ENCODE measurements at regions of chr7 and their contacts with region 1.

Region 1: DNA sequence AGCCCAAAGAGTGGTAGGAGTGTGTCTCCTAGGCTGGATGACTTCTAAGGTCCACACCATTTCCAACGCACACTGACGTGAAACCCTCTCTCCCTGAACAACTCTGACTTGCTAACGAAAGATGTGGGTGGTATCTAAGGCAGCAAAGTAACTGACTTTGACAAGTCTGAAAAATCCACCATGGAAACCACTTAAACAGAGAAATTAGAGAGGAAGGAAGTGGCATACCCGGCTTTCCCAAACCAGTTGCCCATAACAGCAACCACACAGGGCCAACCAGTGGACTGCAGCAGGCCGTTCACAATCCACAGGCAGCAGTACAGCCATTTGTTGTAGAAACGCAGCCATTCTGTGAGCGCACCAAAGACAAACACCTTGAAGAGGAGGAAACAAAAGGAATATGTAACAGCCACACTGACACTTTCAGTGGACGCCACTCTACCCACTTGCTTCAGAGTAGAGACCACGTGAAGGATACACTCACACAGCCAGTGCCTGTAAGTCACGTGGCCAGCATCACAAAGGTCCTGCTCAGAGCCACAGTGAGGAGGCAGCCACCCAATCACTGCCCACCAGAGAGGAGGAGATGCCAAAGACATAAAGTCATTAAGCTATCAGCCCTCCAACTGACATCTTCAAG is 39.8 kb downstream of the SLC37A3 start:
- DNase-seq: peak; percentile 47
- ATAC-seq: peak; percentile 62
- H3K4me3 Mint-ChIP-seq: peak overlapping the region; percentile 47
- H3K27ac Mint-ChIP-seq: peak overlapping the region; percentile 97
- H3K4me1 Mint-ChIP-seq: peaks cover 30% of the 10 kb centered on the region
- H3K27me3 Mint-ChIP-seq: no peaks in the 10 kb centered on the region

Region 2: GRCh38 chr7:140059273-140060242 is 299.0 kb before region 1 on chr7:
- CTCF ChIA-PET with region 1: no interaction called
- POLR2A ChIA-PET with region 1: no interaction called
- intact Hi-C with region 1: no loop called
- DNase-seq: peak; percentile 75
- ATAC-seq: peak; percentile 39
- H3K4me3 Mint-ChIP-seq: peak overlapping the region; percentile 78
- H3K27ac Mint-ChIP-seq: peak overlapping the region; percentile 86
- H3K4me1 Mint-ChIP-seq: peaks cover 42% of the 10 kb centered on the region
- H3K27me3 Mint-ChIP-seq: no peaks in the 10 kb centered on the region

Region 3: DNA sequence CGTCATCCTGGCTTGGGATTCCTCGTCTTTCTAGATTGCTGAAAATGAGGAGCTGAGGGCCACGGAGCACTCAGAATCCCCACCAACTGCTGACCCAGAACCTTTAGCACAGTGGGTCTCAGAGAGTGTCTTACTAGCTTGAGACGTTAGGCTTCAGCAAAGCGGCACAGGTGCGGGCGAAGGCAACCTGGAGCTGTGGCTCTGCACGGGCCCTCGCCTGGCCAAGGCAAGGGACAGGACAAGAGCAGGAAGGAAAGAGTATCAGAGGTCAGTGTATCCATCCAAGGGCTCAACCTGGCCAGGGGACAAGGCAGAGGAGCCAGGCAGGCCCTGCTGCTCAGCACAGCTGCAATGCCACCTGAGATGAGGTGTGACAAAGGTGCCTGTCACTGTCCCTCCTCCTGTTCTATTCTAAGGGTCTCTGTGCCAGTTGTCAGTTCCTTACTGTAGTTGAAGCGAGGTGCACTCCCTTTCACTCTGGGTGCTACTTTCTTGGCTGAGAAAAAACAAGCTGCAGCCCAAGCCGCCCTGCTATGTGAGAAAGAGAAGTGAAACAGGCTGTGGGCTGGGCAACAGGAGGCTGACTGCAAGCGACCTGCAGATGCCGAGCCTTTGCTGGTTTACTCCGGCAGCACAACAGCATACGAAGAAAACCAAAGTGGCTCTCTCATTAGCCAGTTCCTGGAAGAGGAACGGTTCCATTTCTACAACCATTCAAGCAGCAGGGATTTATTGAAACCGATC is 148.5 kb before region 1 on chr7:
- CTCF ChIA-PET with region 1: no interaction called
- POLR2A ChIA-PET with region 1: interaction called, 11 read pairs
- intact Hi-C with region 1: no loop called
- DNase-seq: peak; percentile 83
- ATAC-seq: peak; percentile 62
- H3K4me3 Mint-ChIP-seq: peak overlapping the region; percentile 2
- H3K27ac Mint-ChIP-seq: peak overlapping the region; percentile 88
- H3K4me1 Mint-ChIP-seq: peaks cover 80% of the 10 kb centered on the region
- H3K27me3 Mint-ChIP-seq: no peaks in the 10 kb centered on the region

Region 4: DNA sequence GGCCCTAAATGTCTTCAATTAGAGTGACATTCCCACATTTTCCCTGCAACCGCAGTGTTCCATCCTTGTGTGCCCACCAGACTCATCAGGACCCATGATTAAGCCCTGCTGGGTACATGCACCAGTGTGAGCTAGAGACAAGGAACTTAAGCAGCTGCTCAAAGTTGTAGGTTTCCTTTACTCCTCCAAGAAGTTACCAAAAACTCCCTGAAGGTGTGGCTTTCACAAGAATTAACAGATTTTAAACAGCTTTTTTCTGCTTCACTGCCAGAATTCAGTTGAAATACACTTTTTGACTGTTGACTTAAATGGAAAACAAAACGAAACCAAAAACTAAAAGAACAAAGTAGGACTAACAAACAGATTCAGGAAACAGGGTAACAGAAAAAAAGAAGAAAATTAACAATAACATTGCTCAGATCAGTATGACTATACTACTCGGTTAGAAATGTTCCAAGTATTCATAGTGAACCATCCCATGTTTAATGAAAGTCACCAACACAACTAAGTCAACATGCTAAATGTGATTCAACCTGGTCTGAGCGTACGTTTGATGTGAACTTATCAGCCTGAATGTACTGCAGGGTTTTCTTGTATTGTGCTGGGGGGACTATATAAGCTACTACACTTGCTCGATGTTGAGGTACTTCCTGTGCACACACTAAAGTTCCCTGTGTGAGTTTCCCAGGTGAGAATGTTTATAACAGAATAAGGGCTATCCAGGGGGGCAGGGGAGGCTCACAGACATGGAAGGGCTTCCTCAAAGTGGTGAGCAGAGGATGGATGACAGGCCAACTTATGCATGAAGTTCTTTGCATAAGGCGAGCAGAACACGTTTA is 17.6 kb after region 1 on chr7:
- CTCF ChIA-PET with region 1: interaction called, 17 read pairs
- POLR2A ChIA-PET with region 1: interaction called, 42 read pairs
- intact Hi-C with region 1: loop called (anchors 1 kb)
- DNase-seq: peak; percentile 45
- ATAC-seq: peak; percentile 90
- H3K4me3 Mint-ChIP-seq: peak overlapping the region; percentile 57
- H3K27ac Mint-ChIP-seq: peak overlapping the region; percentile 95
- H3K4me1 Mint-ChIP-seq: peaks cover 53% of the 10 kb centered on the region
- H3K27me3 Mint-ChIP-seq: no peaks in the 10 kb centered on the region

Region 5: DNA sequence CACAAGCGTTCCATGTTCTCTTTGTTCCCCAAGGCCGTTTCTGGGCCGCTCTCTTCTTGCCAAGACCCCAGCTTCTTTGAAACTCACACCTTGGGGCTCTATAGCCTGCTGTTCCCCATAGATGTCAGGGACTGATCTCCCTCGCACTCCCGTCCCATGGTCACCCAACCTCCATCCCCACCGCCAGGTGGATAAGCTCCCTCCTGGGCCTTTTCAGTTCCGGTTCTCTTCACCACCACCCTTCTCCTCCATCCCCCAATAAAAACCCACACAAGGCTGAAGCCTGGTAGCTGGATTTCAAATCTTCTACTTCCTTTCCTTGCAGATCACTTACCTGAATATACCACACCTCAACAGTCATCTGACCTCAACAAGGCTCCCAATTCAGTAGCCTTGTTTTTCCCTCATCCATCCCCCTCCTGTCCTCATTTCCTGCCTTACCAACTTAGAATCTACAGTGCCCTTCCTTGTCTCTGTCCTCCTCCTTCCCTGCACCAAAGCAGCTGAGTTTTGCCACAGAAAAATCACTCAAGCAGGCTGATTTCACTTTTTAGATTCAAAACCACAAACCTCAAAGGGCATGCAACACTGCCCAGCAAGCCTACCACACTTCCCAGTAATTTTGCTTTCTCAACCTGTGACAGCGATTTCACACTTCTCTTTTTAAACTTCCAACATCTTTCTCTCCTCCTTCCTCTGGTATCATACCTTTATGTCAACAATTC is 32.1 kb after region 1 on chr7:
- CTCF ChIA-PET with region 1: interaction called, 4 read pairs
- POLR2A ChIA-PET with region 1: interaction called, 3 read pairs
- intact Hi-C with region 1: loop called in 1 of 2 experiments (anchors 1 kb)
- DNase-seq: peak; percentile 55
- ATAC-seq: peak; percentile 57
- H3K4me3 Mint-ChIP-seq: no peak overlapping the region
- H3K27ac Mint-ChIP-seq: no peak overlapping the region
- H3K4me1 Mint-ChIP-seq: peaks cover 3% of the 10 kb centered on the region
- H3K27me3 Mint-ChIP-seq: no peaks in the 10 kb centered on the region

Region 6: DNA sequence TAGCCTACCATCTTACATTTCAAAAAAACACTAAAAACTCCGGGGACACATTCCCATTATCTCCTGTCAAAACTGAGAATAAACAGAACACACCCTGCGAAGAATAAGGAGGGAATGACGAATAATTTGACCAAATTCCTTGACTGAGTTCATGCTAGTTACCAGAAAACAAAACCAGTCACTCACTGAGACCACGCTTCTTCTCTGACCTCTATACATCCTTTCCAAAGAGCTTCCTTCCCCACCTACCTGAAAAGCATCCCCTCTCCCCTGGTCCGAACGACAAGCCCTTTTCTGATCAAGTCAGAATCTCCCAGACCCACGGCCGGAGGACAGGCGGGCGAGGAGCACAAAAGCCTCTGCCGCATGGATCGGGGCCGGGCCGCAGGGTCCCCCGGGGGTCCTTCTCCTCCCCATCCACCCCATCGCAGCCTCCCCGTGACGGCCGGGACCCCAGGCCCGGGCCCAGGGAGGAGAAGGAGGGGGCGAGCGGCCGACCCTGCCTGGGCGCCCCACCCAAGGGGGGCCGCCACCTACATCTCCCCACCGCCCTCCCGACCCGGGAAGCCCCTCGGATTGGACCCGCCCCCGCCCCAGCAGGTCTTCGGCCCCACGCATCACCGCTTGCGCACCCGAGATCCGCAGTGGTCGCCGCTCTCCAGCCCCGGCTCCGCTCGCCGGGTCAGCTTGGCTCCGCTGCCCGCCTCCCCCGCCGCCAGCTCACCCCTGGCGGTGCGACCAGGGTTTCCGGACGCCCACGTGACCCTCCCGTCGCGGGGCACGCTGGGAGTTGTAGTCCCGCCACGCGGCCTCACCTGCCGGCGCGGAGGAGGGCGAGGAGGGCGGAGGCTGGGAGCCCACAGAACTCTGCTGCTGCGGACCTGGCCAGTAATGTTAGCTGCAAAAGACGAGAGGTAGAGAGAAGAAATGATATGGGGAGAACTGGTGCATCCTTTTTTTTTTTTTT is 39.5 kb after region 1 on chr7 and contains the start of gene SLC37A3:
- CTCF ChIA-PET with region 1: no interaction called
- POLR2A ChIA-PET with region 1: interaction called, 3 read pairs
- intact Hi-C with region 1: loop called in 1 of 2 experiments (anchors 2 kb)
- DNase-seq: peak; percentile 94
- ATAC-seq: peak; percentile 86
- H3K4me3 Mint-ChIP-seq: peak within 1 kb of the TSS; percentile 88
- H3K27ac Mint-ChIP-seq: peak within 1 kb of the TSS; percentile 91
- H3K4me1 Mint-ChIP-seq: peaks cover 37% of the 10 kb centered on the region
- H3K27me3 Mint-ChIP-seq: no peaks in the 10 kb centered on the region
- total RNA-seq, gene SLC37A3: 47.5 to 55.5 TPM

Region 7: DNA sequence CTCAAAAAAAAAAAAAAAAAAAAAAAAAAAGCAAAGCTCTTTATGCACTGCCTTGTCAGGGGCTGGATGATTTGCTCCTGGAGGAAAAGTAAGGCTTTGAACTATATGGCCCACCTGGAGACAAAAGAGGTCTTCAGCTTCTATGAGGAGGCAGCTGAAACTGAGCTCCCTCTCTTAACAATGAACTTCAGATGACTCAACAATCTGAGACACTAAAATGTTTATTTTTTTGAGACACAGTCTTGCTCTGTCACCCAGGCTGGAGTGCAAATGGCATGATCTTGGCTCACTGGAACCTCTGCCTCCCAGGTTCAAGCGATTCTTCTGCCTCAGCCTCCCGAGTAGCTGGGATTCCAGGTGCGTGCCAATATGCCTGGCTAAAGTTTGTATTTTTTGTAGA is 82.1 kb after region 1 on chr7:
- CTCF ChIA-PET with region 1: interaction called, 10 read pairs
- POLR2A ChIA-PET with region 1: interaction called, 3 read pairs
- intact Hi-C with region 1: loop called in 1 of 2 experiments (anchors 5 kb)
- DNase-seq: no peak
- ATAC-seq: no peak
- H3K4me3 Mint-ChIP-seq: no peak overlapping the region
- H3K27ac Mint-ChIP-seq: no peak overlapping the region
- H3K4me1 Mint-ChIP-seq: peaks cover 10% of the 10 kb centered on the region
- H3K27me3 Mint-ChIP-seq: peaks cover 2% of the 10 kb centered on the region

Measured in activated CD4-positive, alpha-beta T cell treated with anti-CD3 and anti-CD28 coated beads for 36 hours (primary cell).